OCI-LY7 (cell line): ENCODE measurements at regions of chr12 and their contacts with region 1.

Region 1: DNA sequence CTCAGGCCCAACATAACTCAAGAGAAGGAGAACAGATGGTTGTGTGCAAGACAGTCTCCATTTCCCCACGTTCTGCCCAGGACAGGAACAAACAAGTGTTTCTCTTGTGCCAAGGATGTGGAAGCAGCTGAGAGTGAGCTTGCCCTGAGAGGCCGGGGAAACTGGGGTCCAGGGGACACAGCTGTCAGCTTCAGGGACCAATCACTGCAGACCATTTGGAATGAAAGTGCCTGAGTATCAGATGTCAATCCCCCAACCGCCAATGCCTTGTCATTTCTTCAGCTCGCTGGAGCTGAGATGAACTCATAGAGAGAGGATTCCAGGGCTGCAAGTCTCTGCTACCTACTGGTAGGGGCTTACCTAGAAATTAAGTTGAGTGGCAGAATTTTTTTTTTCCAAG is 71.9 kb upstream of the METAP2 start:
- DNase-seq: no peak
- H3K4me3 ChIP-seq: no peak overlapping the region
- H3K27ac ChIP-seq: no peak overlapping the region
- H3K4me1 ChIP-seq: no peaks in the 10 kb centered on the region
- CTCF ChIP-seq: no peak

Region 2: DNA sequence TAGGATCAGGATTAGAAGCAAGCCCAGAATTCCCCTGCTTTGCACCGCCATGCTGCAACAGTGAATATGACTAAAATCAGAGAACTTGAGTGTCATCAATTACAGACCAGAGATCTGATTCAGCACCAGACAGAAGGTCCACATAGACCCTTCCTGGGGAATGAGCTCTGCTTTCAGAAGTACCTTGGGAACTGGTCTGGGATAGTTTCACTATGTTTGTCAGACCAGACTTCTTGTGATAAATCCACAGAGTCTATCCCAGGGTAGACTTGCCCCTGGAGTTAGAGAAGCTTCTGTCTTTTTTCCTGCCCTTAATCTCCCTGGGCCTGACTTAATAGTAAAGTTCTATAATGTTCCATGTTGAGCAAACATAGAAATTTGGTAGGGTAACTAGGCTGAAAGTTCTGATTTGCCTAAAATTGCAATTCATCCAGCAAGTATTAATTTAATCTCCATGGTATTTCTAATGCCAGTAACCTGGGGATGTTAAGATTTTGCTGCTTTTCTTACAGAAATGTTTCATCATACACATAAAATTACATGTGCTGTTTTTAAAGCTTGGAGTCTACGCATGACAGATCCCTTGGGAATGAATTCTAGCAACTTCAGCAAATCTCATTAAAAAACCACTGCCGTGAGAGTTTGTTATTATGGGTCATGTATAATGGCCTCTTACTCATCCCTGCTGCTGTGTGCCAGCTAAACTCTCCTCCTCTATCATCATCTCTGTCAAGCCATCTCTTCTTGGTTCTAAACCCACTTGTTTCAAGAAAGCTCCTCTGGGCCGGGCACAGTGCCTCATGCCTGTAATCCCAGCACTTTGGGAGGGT is 10.6 kb after region 1 on chr12:
- CTCF ChIA-PET with region 1: no interaction called
- POLR2A ChIA-PET with region 1: interaction called, 12 read pairs
- intact Hi-C with region 1: no loop called
- DNase-seq: no peak
- H3K4me3 ChIP-seq: no peak overlapping the region
- H3K27ac ChIP-seq: no peak overlapping the region
- H3K4me1 ChIP-seq: peaks cover 35% of the 10 kb centered on the region
- CTCF ChIP-seq: no peak